ENCODE measurements at regions of chr22 and their contacts with region 1.

Region 1: GRCh38 chr22:30408414-30409104 is 11.7 kb downstream of the SEC14L2 start:
- DNase-seq: no peak
- ATAC-seq: peak in 2 of 4 donors; percentile 15 to 57
- H3K4me3 ChIP-seq: no peak overlapping the region
- H3K27ac ChIP-seq: no peak overlapping the region
- H3K4me1 ChIP-seq: no peaks in the 10 kb centered on the region
- H3K27me3 ChIP-seq: no peaks in the 10 kb centered on the region
- CTCF ChIP-seq: no peak
- POLR2A ChIP-seq: no peak

Region 2: DNA sequence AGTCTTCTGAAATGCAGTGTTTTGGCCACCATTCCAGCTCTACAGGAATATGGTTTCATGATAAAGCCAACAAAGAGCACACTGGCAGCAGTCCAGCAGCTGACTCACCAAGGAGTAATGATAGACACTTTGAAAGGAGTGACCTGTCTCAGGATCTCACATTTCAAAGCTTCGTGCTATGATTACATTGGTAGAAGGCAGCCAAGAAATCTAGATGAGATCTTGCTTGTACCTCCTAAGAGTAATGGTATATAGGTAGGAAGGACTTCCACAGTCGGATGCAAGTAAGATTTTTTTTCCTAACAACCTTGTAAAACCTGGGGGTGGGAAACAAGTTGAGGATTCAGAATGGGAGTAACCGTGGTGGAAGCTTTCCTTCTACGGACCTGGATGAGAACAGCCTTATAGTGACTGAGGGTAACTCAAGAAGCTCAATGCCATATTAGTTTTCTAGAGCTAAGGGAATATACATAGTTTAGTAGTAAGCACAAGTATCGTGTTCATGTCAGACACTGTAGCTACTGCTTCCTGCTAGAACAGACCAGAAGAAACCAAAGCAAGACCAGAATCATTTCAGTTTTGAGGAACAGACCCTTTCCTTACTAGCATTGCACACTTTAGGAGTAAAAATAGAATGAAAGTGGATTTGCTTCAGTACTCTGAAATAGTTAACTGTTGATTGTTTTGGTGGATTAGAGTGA is 500.6 kb before region 1 on chr22:
- intact Hi-C with region 1: no loop called
- DNase-seq: peak; percentile 71 to 85 (median 73)
- ATAC-seq: peak; percentile 44 to 79 (median 72)
- H3K4me3 ChIP-seq: no peak overlapping the region
- H3K27ac ChIP-seq: peak overlapping the region in 8 of 12 donors; percentile 3 to 44 (median 22)
- H3K4me1 ChIP-seq: peaks cover 3 to 79% (median 49%) of the 10 kb centered on the region in 12 donors
- H3K27me3 ChIP-seq: no peaks in the 10 kb centered on the region
- CTCF ChIP-seq: no peak
- POLR2A ChIP-seq: no peak

Region 3: GRCh38 chr22:30830907-30831306 is 422.3 kb after region 1 on chr22:
- intact Hi-C with region 1: loop called in 1 of 10 experiments (anchors 10 kb)
- DNase-seq: peak in 4 of 5 donors; percentile 23 to 59 (median 30)
- ATAC-seq: peak in 3 of 4 donors; percentile 64 to 77 (median 75)
- H3K4me3 ChIP-seq: no peak overlapping the region
- H3K27ac ChIP-seq: no peak overlapping the region
- H3K4me1 ChIP-seq: peaks cover 0 to 15% (median 2%) of the 10 kb centered on the region in 12 donors
- H3K27me3 ChIP-seq: no peaks in the 10 kb centered on the region
- CTCF ChIP-seq: no peak
- POLR2A ChIP-seq: no peak

Region 4: GRCh38 chr22:30856741-30857502 is 448.4 kb after region 1 on chr22:
- intact Hi-C with region 1: no loop called
- DNase-seq: no peak
- ATAC-seq: no peak
- H3K4me3 ChIP-seq: no peak overlapping the region
- H3K27ac ChIP-seq: no peak overlapping the region
- H3K4me1 ChIP-seq: no peaks in the 10 kb centered on the region
- H3K27me3 ChIP-seq: no peaks in the 10 kb centered on the region
- CTCF ChIP-seq: no peak
- POLR2A ChIP-seq: no peak